AG04450 (cell line): ENCODE measurements at regions of chr7 and their contacts with region 1.

Region 1: GRCh38 chr7:91880413-91881241 is at the start of gene MTERF1:
- DNase-seq: peak; percentile 83
- H3K4me3 ChIP-seq: peak within 1 kb of the TSS; percentile 92
- H3K27ac ChIP-seq: peak within 1 kb of the TSS; percentile 12
- H3K27me3 ChIP-seq: no peaks in the 10 kb centered on the region
- CTCF ChIP-seq: peak; percentile 99
- polyA plus RNA-seq, gene MTERF1: 11.1 and 18.3 TPM in 2 replicates

Region 2: DNA sequence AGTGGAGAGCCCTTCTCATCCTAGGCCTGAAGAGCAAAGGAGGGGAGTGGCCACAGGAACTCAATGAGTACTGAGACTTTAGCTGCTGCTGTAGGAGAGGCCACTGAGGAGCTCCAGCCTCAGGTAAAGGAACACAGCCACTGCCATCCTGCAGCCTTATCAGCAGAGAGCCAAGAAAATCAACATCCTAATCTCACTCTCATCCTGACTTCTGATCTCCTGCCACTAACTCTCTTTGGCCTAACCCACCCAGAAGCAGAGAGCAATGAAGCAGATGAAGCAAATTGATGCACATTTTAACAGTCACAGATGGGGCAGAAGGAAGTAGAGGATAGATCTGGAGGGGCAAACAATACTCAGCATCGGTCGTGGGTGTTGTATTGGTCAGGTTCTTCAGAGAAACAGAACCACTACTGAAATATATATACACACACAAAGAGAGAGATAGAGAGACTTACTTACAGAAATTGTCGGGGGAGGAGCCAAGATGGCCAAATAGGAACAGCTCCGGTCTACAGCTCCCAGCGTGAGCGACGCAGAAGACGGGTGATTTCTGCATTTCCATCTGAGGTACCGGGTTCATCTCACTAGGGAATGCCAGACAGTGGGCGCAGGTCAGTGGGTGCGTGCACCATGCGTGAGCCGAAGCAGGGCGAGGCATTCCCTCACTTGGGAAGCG is 297.7 kb before region 1 on chr7:
- CTCF ChIA-PET with region 1: no interaction called
- POLR2A ChIA-PET with region 1: no interaction called
- DNase-seq: no peak
- H3K4me3 ChIP-seq: no peak overlapping the region
- H3K27ac ChIP-seq: no peak overlapping the region
- H3K27me3 ChIP-seq: no peaks in the 10 kb centered on the region
- CTCF ChIP-seq: no peak

Region 3: DNA sequence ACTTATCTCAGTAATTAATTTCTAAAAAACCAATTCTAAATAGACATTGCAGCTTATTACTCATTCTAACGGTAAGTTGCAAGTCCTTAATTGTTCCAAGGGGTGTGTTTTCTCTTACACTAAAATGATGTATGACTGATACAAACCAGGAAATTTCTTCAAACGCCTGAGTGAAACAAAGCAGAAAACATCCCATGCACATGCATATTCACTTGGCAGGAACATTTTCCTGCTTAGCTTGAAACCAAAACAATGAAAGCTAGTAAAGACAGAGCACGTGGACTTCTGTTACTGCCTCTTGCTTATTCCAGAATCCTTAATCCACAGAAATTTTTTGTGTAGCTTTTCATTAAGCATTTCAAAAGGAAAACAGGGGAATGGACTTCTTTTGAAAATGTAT is 187.8 kb before region 1 on chr7:
- CTCF ChIA-PET with region 1: no interaction called
- POLR2A ChIA-PET with region 1: no interaction called
- DNase-seq: no peak
- H3K4me3 ChIP-seq: no peak overlapping the region
- H3K27ac ChIP-seq: no peak overlapping the region
- H3K27me3 ChIP-seq: no peaks in the 10 kb centered on the region
- CTCF ChIP-seq: no peak

Region 4: DNA sequence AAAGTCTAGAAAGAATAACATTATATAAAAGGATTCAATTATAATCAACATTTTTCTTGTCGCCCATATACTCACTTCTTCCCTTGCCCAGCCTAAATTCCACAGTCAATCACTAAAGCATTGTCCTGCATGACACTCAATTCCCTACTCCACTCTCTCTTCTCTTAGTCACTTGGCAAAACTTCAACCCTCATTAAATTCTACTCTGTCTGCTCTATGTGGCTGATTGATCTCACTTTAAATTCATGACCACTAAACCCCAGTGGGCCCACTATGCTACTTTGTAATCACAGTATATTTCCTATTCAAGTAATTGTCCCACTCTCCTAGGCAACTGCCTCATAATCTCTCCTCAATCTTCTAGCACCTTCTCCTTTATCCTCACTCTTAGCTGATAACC is 54.2 kb before region 1 on chr7:
- CTCF ChIA-PET with region 1: interaction called, 17 read pairs
- POLR2A ChIA-PET with region 1: no interaction called
- DNase-seq: no peak
- H3K4me3 ChIP-seq: no peak overlapping the region
- H3K27ac ChIP-seq: no peak overlapping the region
- H3K27me3 ChIP-seq: no peaks in the 10 kb centered on the region
- CTCF ChIP-seq: no peak

Region 5: GRCh38 chr7:91835846-91836368 is 44.7 kb before region 1 on chr7:
- CTCF ChIA-PET with region 1: interaction called, 17 read pairs
- POLR2A ChIA-PET with region 1: no interaction called
- DNase-seq: peak; percentile 23
- H3K4me3 ChIP-seq: no peak overlapping the region
- H3K27ac ChIP-seq: no peak overlapping the region
- H3K27me3 ChIP-seq: no peaks in the 10 kb centered on the region
- CTCF ChIP-seq: no peak

Region 6: DNA sequence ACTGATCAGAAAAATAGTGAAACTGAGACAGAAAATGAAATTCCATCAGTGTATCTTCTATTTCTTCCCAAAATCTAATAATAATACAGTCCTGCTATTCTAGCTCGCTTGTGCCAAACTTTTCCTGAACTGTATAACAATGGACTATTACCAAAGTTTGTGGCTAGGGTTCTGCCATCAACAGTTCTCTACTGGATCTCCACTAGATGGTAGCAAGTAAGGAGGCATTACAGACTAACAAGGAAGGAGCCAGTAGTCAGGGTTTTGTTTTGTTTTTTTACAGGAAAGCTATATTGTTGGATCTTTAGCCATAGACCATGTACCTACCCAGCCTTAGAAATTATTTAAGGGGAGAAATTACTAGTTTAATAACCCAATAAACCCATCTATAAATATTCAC is 11.0 kb before region 1 on chr7:
- CTCF ChIA-PET with region 1: interaction called, 33 read pairs
- POLR2A ChIA-PET with region 1: interaction called, 9 read pairs
- DNase-seq: no peak
- H3K4me3 ChIP-seq: no peak overlapping the region
- H3K27ac ChIP-seq: no peak overlapping the region
- H3K27me3 ChIP-seq: no peaks in the 10 kb centered on the region
- CTCF ChIP-seq: no peak

Region 7: DNA sequence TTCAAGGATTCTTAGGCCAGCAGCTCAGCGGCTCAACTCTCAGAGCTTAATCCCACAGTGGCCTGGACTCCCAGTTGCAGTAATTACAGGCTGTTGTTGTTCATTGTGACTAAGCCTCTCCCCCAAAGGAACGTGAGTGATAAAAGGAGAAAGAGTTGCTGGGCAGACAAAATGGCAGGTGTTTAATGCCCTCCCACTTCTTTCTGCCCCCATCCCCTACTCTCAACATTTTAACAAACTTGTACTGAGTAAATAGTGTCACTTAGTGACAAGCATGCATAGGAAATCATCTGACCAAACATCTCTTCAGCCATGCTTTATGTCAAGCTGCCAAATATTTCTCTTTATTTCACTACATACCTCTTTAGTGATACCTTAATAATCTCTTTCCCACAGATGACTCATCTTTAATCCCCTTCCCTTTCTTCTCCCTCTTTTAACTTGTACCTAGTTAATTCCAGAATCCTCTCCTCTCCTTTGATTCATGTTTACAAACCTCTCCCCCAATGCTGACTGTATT is 12.3 kb after region 1 on chr7:
- CTCF ChIA-PET with region 1: interaction called, 28 read pairs
- POLR2A ChIA-PET with region 1: no interaction called
- DNase-seq: no peak
- H3K4me3 ChIP-seq: no peak overlapping the region
- H3K27ac ChIP-seq: no peak overlapping the region
- H3K27me3 ChIP-seq: no peaks in the 10 kb centered on the region
- CTCF ChIP-seq: no peak

Region 8: DNA sequence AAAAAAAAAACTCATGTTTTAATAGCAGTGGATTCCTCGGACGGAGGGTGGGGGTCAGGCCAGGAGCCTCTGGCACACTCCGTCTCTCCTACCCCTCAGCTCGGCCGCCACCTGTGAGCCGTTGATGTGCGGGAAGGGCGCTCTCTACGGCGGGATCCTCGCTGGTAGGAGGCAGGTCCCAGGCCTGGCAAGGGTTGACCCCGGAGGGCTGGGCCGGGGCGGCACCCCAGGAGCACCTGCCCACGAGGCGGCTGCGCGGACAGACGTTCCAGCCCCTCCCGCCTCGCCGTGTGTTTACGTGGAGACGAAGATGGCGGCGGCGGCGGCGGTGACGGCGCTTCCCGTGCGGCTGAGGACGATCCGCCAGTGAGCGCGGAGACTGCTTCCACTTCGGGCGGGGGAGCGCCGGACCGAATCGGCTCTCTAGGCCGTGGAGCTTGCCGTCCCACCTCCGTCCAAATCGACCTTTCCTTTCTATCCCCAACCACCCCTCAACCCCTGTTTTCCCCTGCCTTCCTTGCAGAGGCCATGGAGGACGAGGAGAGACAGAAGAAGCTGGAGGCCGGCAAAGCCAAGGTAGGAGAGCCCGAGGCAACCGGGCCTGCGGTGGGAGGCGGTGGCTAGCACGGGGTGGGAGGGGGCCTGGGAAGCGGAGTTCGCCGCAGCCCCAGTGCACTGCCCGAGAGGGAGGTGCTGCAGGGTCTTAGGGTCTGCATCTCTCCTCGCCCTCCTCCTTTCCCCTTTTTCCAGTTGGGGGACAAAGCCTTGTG is 60.1 kb after region 1 on chr7 and contains the start of gene AKAP9:
- CTCF ChIA-PET with region 1: interaction called, 12 read pairs
- POLR2A ChIA-PET with region 1: interaction called, 5 read pairs
- DNase-seq: no peak
- H3K4me3 ChIP-seq: peak within 1 kb of the TSS; percentile 89
- H3K27ac ChIP-seq: peak within 1 kb of the TSS; percentile 89
- H3K27me3 ChIP-seq: no peaks in the 10 kb centered on the region
- CTCF ChIP-seq: no peak
- polyA plus RNA-seq, gene AKAP9: 17.2 and 24.3 TPM in 2 replicates